GM10248 (cell line): ENCODE measurements at regions of chr7 and their contacts with region 1.

Region 1: DNA sequence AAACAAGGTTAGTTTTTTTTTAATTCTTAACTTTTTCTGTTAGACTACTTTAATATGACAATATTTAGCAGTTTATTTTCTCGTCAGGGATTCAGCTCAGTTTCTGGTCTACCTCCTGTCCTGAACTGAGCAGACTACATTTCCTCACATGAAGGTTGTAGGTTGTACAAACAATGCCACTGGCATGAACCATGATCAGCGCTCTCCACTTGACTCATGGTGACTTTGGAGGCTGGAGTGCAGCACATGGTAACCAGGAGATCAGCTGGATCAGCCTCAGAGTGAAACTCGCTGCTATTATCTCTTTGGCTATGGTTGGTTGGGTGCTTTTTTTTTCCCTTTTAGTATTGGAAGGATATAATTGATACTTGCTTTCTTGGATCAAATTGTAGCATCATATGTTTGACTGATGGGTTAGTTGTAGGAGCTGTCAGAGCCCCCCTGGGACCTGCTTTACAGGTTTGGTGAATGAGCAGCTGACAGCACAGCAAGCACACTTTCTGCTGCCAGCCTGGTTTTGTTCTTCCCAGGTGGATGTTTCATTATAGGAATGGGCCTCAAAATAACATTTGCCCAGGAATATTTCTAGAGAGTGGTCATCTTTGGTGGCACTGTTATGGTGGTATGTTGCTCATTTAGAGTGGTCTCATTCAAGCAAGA is 556.4 kb downstream of the AUTS2 start:
- DNase-seq: no peak
- CTCF ChIP-seq: no peak

Region 2: DNA sequence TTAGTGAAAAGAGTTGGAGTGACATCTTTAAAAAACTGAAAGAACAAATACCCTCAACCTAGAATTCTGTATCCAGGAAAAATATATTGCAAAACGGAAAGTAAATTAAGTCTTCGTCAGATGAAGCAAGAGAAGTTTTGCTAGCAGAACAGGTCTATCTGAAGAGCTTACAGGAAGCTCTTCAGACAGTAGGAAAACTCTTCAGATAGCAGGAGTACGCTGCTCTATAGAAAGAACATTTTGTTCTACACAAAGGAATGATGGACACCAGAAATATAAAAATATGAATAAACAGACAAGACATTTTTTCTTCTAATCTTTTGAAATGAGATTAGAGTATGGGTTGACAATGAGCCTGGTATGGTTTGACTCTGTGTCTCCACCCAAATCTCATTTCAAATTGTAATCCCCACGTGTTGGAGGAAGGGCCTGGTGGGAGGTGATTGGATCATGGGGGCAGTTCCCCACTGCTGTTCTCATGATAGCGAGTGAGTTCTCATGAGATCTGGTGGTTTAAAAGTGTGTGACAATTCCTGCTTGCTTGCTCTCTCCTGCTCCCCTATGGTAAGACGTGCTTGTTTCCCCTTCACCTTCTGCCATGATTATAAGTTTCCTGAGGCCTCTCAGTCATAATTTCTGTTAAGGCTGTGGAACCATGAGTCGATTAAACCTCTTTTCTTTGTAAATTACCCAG is 11.0 kb after region 1 on chr7:
- CTCF ChIA-PET with region 1: interaction called, 11 read pairs
- POLR2A ChIA-PET with region 1: no interaction called
- DNase-seq: no peak
- CTCF ChIP-seq: no peak